ENCODE measurements at regions of chr12 and their contacts with region 1.

Region 1: DNA sequence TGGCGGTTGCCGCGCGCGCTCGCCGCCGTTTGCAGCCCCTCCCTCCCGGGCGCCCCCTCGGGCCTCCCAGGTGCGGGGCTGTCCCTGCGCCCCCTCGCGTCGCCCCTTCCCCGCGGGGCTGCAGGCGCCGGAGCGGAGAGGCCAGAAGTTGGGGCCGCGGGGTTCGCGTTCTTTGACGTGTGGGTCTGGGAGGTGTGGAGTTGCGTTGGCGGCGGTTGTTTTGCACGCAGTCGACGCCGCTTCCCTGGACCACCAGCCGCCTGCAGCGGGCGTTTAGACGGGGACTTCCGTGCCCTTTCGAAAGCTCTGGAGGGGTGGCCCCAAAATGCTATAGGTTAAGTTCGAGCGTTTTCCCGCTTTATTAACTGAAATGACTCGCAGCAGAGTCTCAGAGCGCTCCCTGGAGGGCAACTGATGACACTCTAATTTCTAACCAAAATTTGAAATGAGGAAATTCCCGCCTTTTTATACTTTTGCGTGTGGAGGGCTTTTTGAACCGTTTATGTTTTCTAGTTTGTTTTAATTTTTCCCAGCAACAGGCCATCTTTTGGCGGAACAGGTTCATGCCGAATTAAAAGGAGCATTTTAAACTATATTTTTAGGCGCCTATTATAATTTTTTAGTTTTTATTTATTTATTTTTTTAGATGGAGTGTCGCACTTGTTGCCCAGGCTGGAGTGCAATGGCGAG is 939 bp downstream of the TMPO start:
- DNase-seq: peak; percentile 52 to 78
- H3K4me3 ChIP-seq: peak overlapping the region; percentile 77 to 96
- H3K27ac ChIP-seq: peak overlapping the region; percentile 97 to 98
- H3K4me1 ChIP-seq: peaks cover 0 to 10% of the 10 kb centered on the region in 2 donors
- H3K27me3 ChIP-seq: no peaks in the 10 kb centered on the region
- CTCF ChIP-seq: peak; percentile 71 to 76 (median 72)
- POLR2A ChIP-seq: peak in 1 of 2 donors; percentile 23

Region 2: GRCh38 chr12:98424726-98425401 is 91.5 kb before region 1 on chr12:
- intact Hi-C with region 1: loop called (anchors 5 kb)
- DNase-seq: peak; percentile 42 to 51
- H3K4me3 ChIP-seq: no peak overlapping the region
- H3K27ac ChIP-seq: no peak overlapping the region
- H3K4me1 ChIP-seq: peaks cover 0 to 5% of the 10 kb centered on the region in 2 donors
- H3K27me3 ChIP-seq: no peaks in the 10 kb centered on the region
- CTCF ChIP-seq: peak; percentile 58 to 64 (median 61)
- POLR2A ChIP-seq: no peak

Measured in uterus (tissue), 4 donors.